Calu3 (cell line): ENCODE measurements at regions of chr14 and their contacts with region 1.

Region 1: GRCh38 chr14:24241829-24242443 is 487 bp downstream of the TINF2 start:
- DNase-seq: peak; percentile 95
- H3K4me3 Mint-ChIP-seq: peak overlapping the region; percentile 83
- H3K27ac Mint-ChIP-seq: peak overlapping the region; percentile 96
- H3K4me1 Mint-ChIP-seq: peaks cover 11% of the 10 kb centered on the region
- H3K27me3 Mint-ChIP-seq: no peaks in the 10 kb centered on the region
- CTCF ChIP-seq: peak; percentile 53

Region 2: GRCh38 chr14:24271134-24271833 is 29.3 kb after region 1 on chr14 and contains the start of gene RABGGTA:
- CTCF ChIA-PET with region 1: interaction called, 9 read pairs
- intact Hi-C with region 1: loop called (anchors 2 kb)
- DNase-seq: peak; percentile 90
- H3K4me3 Mint-ChIP-seq: peak within 1 kb of the TSS; percentile 67
- H3K27ac Mint-ChIP-seq: peak within 1 kb of the TSS; percentile 65
- H3K4me1 Mint-ChIP-seq: peaks cover 32% of the 10 kb centered on the region
- H3K27me3 Mint-ChIP-seq: no peaks in the 10 kb centered on the region
- CTCF ChIP-seq: peak; percentile 35
- total RNA-seq, gene RABGGTA: 35.3 and 42.2 TPM in 2 replicates

Region 3: DNA sequence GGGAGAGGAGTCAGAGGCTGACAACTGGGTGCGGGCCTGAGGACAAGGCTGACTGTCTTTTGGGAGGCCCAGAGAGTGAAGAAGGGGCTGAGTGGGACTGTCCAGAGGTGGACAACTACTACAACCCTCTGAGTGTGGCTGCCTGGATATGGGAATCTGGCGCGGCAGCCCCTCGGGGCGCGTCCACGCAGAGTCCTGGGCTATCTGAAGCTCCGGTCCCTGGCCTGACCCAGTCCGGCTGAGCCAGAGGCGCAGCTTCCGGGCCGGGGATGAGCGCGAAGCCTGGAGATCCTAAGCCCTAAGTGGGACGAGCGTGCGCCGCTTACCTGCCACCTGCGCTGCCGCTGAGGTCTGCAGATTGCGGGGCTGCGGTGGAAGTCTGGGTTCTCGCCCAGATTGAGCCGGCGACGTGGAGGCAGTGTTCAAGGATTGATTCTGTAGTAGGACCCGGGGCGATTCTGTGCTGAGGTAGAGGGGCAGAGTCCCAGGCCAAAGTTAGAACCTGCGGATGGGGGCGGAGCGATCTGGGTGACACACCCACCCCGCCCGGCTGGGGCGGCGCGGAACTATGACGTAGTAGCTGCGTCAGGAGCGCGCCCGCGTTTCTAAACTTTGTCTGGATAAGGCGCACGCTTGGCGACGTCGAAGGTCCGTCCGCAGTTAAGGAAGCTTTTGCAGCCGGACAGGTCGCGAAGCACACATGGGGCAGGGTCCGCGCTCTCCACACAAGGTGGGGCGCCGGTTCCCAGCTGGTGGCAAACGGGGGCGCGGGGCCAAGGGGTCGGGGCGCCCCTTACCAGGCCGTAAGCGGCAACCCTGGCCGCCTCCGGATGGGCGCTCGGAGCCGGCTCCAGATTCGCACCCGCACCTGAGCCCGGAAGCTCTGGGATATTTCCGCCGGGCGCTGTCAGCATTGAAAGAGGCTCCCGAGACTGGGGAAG is 57.6 kb after region 1 on chr14 and contains the starts of genes DHRS1 and NOP9:
- CTCF ChIA-PET with region 1: interaction called, 108 read pairs
- intact Hi-C with region 1: loop called (anchors 1 kb)
- DNase-seq: peak; percentile 94
- H3K4me3 Mint-ChIP-seq: peak within 1 kb of the TSS; percentile 90
- H3K27ac Mint-ChIP-seq: peak within 1 kb of the TSS; percentile 88
- H3K4me1 Mint-ChIP-seq: peaks cover 32% of the 10 kb centered on the region
- H3K27me3 Mint-ChIP-seq: no peaks in the 10 kb centered on the region
- CTCF ChIP-seq: no peak
- total RNA-seq, gene DHRS1: 18.6 and 19.7 TPM in 2 replicates
- total RNA-seq, gene NOP9: 35.9 and 40.2 TPM in 2 replicates

Region 4: DNA sequence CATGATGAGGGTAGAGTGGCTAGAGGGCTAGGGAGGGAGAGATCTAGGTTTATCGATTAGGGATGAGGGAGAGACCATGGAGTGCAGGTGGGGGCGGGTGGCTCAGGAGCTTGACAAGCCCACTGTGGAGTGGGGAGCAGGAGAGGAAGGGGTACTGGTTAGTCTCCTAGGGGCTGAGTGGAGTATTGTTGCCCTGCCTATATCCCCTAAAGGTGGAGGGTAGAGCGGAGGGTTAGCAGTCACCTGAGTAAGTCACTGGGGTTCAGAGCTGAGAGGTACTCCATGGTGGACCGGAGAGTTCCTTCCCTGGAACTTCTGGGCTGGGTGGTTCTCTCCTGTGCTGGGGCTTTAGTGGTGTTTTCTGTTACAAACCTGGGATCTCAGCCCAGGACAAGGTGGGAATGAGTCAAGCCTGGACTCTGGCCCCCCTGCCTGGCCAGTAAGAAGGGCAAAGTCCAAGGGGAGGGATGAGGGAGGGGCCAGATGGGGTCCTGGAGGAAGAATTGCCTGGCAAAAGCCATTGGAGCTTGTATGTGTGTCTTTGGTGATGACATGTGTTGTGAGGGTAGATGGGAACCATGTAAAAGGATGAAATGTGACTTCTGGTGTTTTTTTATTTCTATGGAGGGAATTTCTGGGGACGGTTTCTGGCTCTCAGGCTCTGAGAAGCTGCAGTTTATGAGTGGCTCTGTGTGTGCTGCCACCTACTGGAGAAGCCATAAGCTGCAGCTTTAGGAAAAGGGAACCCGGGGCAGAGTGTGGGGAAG is 65.8 kb after region 1 on chr14 and contains the start of gene CIDEB:
- CTCF ChIA-PET with region 1: interaction called, 18 read pairs
- intact Hi-C with region 1: no loop called
- DNase-seq: peak; percentile 65
- H3K4me3 Mint-ChIP-seq: peak within 1 kb of the TSS; percentile 35
- H3K27ac Mint-ChIP-seq: peak within 1 kb of the TSS; percentile 63
- H3K4me1 Mint-ChIP-seq: peaks cover 21% of the 10 kb centered on the region
- H3K27me3 Mint-ChIP-seq: no peaks in the 10 kb centered on the region
- CTCF ChIP-seq: peak; percentile 86
- total RNA-seq, gene CIDEB: 0.17 TPM in 1 of 2 replicates, not detected in the other